CD4-positive, alpha-beta T cell (primary cell): ENCODE measurements at regions of chr7 and their contacts with region 1.

Region 1: GRCh38 chr7:157432957-157433576 is 96.3 kb downstream of the DNAJB6 start:
- DNase-seq: peak; percentile 46 to 78 (median 58)
- ATAC-seq: peak; percentile 84
- H3K4me3 ChIP-seq: peak overlapping the region; percentile 38
- H3K4me3 Mint-ChIP-seq: peak overlapping the region; percentile 9
- H3K27ac ChIP-seq: no peak overlapping the region
- H3K27ac Mint-ChIP-seq: no peak overlapping the region
- H3K4me1 ChIP-seq: peaks cover 11% of the 10 kb centered on the region
- H3K4me1 Mint-ChIP-seq: peaks cover 11% of the 10 kb centered on the region
- H3K27me3 ChIP-seq: no peaks in the 10 kb centered on the region
- H3K27me3 Mint-ChIP-seq: no peaks in the 10 kb centered on the region
- CTCF ChIP-seq: peak; percentile 82

Region 2: GRCh38 chr7:157474689-157475088 is 41.6 kb after region 1 on chr7:
- CTCF ChIA-PET with region 1: no interaction called
- POLR2A ChIA-PET with region 1: interaction called, 9 read pairs
- intact Hi-C with region 1: loop called in 1 of 2 experiments (anchors 5 kb)
- DNase-seq: peak in 1 of 14 experiments; percentile 33
- ATAC-seq: no peak
- H3K4me3 ChIP-seq: no peak overlapping the region
- H3K4me3 Mint-ChIP-seq: no peak overlapping the region
- H3K27ac ChIP-seq: no peak overlapping the region
- H3K27ac Mint-ChIP-seq: peak overlapping the region; percentile 27
- H3K4me1 ChIP-seq: peaks cover 76% of the 10 kb centered on the region
- H3K4me1 Mint-ChIP-seq: peaks cover 65% of the 10 kb centered on the region
- H3K27me3 ChIP-seq: no peaks in the 10 kb centered on the region
- H3K27me3 Mint-ChIP-seq: no peaks in the 10 kb centered on the region
- CTCF ChIP-seq: peak; percentile 28

Region 3: GRCh38 chr7:157519798-157520244 is 86.8 kb after region 1 on chr7:
- CTCF ChIA-PET with region 1: no interaction called
- POLR2A ChIA-PET with region 1: no interaction called
- intact Hi-C with region 1: loop called in 1 of 2 experiments (anchors 5 kb)
- DNase-seq: peak in 1 of 14 experiments; percentile 15
- ATAC-seq: no peak
- H3K4me3 ChIP-seq: no peak overlapping the region
- H3K4me3 Mint-ChIP-seq: no peak overlapping the region
- H3K27ac ChIP-seq: no peak overlapping the region
- H3K27ac Mint-ChIP-seq: no peak overlapping the region
- H3K4me1 ChIP-seq: no peaks in the 10 kb centered on the region
- H3K4me1 Mint-ChIP-seq: no peaks in the 10 kb centered on the region
- H3K27me3 ChIP-seq: no peaks in the 10 kb centered on the region
- H3K27me3 Mint-ChIP-seq: no peaks in the 10 kb centered on the region
- CTCF ChIP-seq: no peak

Region 4: DNA sequence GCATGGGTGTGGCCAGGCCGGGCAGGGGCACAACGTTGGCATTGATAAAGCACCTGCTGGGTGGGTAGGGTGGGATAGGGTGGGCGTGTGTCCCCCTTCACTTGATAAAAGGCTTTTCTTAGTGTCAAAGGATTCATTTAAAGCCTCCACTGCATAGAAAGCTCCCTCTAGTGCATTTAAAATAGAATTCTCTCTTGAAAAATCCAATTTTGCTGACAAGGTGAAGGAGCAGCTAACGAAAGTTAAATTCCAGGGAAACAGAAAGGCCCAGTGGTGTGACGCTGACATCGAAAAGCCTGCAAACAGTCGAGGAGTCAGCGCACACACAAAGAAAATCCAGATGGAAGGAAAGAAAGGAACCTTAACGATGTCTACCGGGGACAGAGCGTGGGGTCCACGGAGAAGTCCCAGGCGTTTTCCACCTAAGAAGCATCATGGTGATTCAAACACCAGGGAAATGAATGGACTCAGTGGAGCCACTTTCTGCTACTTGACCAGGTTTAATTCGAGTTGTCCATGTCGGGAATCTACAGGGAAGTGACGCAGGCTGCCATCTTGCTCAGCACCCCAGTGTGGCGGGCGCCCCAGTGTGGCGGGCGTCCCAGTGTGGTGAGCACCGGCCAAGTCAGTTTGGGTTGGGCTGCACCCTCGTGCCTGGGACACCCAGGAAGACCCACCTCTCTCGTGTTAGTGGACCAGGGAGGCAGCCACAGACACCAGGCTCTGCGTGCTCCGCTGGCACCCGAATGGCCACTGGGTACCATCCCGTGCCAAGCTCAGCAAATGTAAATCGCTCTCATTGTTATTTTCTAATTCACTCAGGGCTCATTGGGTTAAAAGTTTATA is 121.5 kb after region 1 on chr7:
- CTCF ChIA-PET with region 1: no interaction called
- POLR2A ChIA-PET with region 1: no interaction called
- intact Hi-C with region 1: no loop called
- DNase-seq: no peak
- ATAC-seq: no peak
- H3K4me3 ChIP-seq: no peak overlapping the region
- H3K4me3 Mint-ChIP-seq: no peak overlapping the region
- H3K27ac ChIP-seq: no peak overlapping the region
- H3K27ac Mint-ChIP-seq: no peak overlapping the region
- H3K4me1 ChIP-seq: no peaks in the 10 kb centered on the region
- H3K4me1 Mint-ChIP-seq: no peaks in the 10 kb centered on the region
- H3K27me3 ChIP-seq: no peaks in the 10 kb centered on the region
- H3K27me3 Mint-ChIP-seq: no peaks in the 10 kb centered on the region
- CTCF ChIP-seq: no peak

Region 5: DNA sequence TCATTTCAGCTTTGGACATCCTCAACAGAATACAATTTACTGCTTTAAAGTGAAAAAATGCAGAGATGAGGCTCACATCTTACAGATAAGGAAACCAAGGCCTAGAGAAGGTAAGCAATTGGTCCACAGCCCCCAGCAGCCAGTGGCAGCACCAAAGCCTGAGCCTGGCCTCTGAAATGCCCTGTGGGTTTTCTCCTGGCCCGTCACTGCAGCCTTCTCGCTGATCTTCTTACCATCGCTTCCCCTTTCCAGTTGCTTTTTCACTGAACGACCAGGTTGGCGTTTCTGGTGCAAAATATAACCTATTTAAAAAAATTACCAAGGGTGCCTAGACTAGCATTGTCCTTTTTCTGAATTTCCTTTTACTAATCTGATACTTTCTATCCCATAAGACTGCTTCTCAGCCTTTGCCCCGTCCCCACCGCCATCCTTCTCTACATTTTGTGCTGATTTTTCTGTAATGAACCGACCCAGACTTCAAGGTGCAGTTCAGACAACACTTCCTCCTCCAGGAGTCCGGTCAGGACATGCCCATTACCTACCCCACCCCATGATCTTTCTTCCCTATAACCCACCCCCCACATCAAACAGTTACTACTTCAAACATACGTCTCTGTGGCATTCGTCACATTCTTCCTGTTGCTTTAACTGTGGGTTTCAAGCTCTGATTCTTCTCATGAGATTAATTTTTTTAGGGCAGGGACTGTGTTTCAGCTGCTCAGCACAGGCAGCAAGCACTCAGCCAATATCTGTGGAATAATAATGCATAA is 193.1 kb after region 1 on chr7:
- CTCF ChIA-PET with region 1: no interaction called
- POLR2A ChIA-PET with region 1: no interaction called
- intact Hi-C with region 1: loop called in 1 of 2 experiments (anchors 1 kb)
- DNase-seq: peak in 8 of 14 experiments; percentile 14 to 74 (median 42)
- ATAC-seq: peak; percentile 72
- H3K4me3 ChIP-seq: peak overlapping the region; percentile 19
- H3K4me3 Mint-ChIP-seq: peak overlapping the region; percentile 72
- H3K27ac ChIP-seq: no peak overlapping the region
- H3K27ac Mint-ChIP-seq: peak overlapping the region; percentile 68
- H3K4me1 ChIP-seq: peaks cover 57% of the 10 kb centered on the region
- H3K4me1 Mint-ChIP-seq: peaks cover 80% of the 10 kb centered on the region
- H3K27me3 ChIP-seq: peaks cover 0 to 3% of the 10 kb centered on the region in 2 experiments
- H3K27me3 Mint-ChIP-seq: no peaks in the 10 kb centered on the region
- CTCF ChIP-seq: no peak

Region 6: GRCh38 chr7:157875230-157876179 is 442.4 kb after region 1 on chr7:
- CTCF ChIA-PET with region 1: no interaction called
- POLR2A ChIA-PET with region 1: no interaction called
- intact Hi-C with region 1: loop called in 1 of 2 experiments (anchors 1 kb)
- DNase-seq: peak; percentile 20 to 77 (median 49)
- ATAC-seq: peak; percentile 80
- H3K4me3 ChIP-seq: peak overlapping the region; percentile 48
- H3K4me3 Mint-ChIP-seq: peak overlapping the region; percentile 87
- H3K27ac ChIP-seq: peak overlapping the region in 1 of 2 donors; percentile 1
- H3K27ac Mint-ChIP-seq: peak overlapping the region; percentile 87
- H3K4me1 ChIP-seq: peaks cover 47% of the 10 kb centered on the region
- H3K4me1 Mint-ChIP-seq: peaks cover 37% of the 10 kb centered on the region
- H3K27me3 ChIP-seq: peaks cover 0 to 3% of the 10 kb centered on the region in 2 experiments
- H3K27me3 Mint-ChIP-seq: no peaks in the 10 kb centered on the region
- CTCF ChIP-seq: peak; percentile 73